ENCODE measurements at regions of chr6 and their contacts with region 1.

Region 1: GRCh38 chr6:16286148-16286522 is 47.7 kb downstream of the GMPR start:
- DNase-seq: no peak
- H3K4me3 ChIP-seq: no peak overlapping the region
- H3K27me3 ChIP-seq: no peaks in the 10 kb centered on the region
- CTCF ChIP-seq: peak; percentile 97

Region 2: DNA sequence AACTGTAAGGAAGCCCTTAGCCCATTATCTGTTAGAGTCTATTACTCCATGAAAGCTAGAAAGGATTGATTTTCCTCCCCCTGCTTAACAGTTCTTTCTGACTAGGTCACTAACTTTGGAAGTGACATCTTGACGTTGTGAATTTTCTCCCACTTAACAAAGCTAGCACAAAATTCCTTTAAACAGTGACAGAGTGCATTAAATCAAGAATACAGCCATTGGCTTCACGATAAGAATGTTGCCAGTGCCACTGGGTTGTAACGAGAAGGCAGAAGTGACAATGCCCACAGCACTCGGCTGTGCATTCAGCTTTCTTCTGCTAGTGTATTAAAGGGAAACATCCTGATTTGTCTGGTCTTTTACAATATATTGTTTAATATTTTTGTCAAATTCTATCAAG is 440.6 kb before region 1 on chr6:
- CTCF ChIA-PET with region 1: no interaction called
- POLR2A ChIA-PET with region 1: no interaction called
- DNase-seq: no peak
- H3K4me3 ChIP-seq: no peak overlapping the region
- H3K27me3 ChIP-seq: no peaks in the 10 kb centered on the region
- CTCF ChIP-seq: no peak

Region 3: GRCh38 chr6:16270178-16270794 is 15.8 kb before region 1 on chr6:
- CTCF ChIA-PET with region 1: interaction called, 61 read pairs
- POLR2A ChIA-PET with region 1: no interaction called
- DNase-seq: no peak
- H3K4me3 ChIP-seq: no peak overlapping the region
- H3K27me3 ChIP-seq: no peaks in the 10 kb centered on the region
- CTCF ChIP-seq: no peak

Region 4: DNA sequence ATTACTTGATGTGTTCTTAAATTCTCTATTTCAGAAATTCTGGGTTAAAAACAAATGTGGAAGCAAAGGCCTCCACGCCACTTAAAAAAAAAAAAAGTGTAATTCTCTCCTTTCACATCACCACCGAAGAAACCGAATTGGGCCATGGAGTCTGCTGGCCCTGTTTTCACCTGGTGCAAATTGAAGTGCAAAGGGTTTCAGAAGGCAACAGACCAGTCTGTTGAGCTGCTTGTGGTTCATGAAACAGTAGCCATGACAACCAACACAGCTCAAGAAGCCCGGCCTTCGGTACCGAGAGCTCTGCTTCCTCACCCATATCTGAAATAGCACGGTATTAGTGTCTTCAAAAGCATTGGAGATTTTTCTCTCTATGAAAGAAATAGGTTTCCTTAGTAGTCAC is 15.4 kb after region 1 on chr6:
- CTCF ChIA-PET with region 1: interaction called, 35 read pairs
- POLR2A ChIA-PET with region 1: no interaction called
- DNase-seq: no peak
- H3K4me3 ChIP-seq: no peak overlapping the region
- H3K27me3 ChIP-seq: no peaks in the 10 kb centered on the region
- CTCF ChIP-seq: no peak

Region 5: DNA sequence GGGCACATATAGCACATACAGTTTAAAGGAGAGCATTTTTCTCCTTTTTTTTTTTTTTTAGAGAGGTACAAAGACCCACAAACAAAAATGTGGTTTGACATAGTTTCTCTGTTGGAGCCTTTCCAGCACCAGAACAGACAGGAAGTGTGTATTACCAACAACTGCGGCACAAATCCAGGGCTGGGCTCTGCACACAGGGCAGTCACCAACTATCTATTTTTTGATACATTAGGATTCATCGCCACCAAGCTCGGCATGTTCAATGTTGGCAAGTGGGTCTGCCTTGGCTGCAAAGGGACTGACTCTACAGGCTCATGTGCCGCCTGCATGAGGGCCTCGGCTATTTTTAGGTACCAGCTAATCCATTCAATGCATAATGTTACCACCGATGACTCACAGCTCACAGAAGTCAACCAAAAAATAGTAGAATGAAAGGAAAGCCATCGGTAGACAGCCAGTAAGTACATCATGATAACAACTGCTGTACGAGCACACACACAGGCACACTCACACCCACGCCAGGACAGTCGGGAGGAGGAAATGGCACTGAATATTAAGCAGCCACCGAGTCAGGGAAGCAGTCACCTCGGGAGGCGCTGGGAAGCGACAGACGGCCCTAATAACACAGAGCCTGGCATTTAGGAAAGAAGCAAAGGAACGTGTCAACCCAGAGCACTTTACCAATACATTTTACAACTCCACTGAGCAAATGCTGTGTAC is 33.8 kb after region 1 on chr6:
- CTCF ChIA-PET with region 1: interaction called, 19 read pairs
- POLR2A ChIA-PET with region 1: no interaction called
- DNase-seq: peak; percentile 87
- H3K4me3 ChIP-seq: no peak overlapping the region
- H3K27me3 ChIP-seq: no peaks in the 10 kb centered on the region
- CTCF ChIP-seq: no peak

Region 6: GRCh38 chr6:16332175-16332542 is 46.0 kb after region 1 on chr6:
- CTCF ChIA-PET with region 1: interaction called, 15 read pairs
- POLR2A ChIA-PET with region 1: no interaction called
- DNase-seq: no peak
- H3K4me3 ChIP-seq: no peak overlapping the region
- H3K27me3 ChIP-seq: no peaks in the 10 kb centered on the region
- CTCF ChIP-seq: peak; percentile 91

Region 7: GRCh38 chr6:16514249-16514648 is 228.1 kb after region 1 on chr6:
- CTCF ChIA-PET with region 1: interaction called, 10 read pairs
- POLR2A ChIA-PET with region 1: no interaction called
- DNase-seq: no peak
- H3K4me3 ChIP-seq: no peak overlapping the region
- H3K27me3 ChIP-seq: no peaks in the 10 kb centered on the region
- CTCF ChIP-seq: peak; percentile 59

Measured in BJ (cell line).